HCT116 (cell line): ENCODE measurements at regions of chr2 and their contacts with region 1.

Region 1: DNA sequence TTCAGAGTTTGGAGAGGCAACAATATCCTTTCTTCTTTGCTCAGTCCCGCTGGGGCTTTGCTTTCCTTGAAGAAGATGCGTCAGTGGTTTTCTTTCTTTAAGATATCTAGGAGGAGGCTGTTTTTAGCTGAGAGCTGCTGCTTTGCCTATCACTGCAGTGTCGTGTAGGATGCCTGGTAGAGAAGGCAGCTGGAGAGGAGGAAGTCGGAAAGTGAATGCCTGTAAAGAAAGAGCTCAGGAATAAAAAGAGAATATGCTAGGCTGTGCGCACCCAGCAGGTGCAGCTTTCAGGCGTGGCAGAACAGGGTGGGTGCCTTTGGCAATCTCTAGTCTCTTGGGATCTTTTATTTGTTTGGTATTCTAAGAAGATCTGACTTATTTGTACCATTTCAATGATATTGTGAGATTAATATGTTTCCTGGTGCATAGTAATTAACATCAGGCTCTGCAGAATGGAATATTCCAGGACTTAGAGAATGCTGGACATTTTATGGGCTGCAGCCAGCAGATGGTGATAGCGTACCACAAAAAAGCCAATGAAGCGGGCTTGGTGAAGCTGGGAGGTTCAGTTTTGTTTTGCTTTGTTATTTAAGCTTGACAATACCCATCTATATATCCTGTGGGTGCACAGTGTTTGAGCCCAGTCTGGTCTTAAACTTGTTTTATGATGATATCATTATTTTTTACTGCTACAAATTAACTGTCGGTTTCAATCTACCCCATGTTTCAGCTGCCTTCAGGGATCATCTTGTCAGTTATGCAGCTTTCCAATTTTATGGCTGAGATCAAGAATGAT is 34.9 kb downstream of the CAVIN2 start:
- DNase-seq: peak; percentile 53
- ATAC-seq: peak; percentile 94
- H3K4me3 ChIP-seq: no peak overlapping the region
- H3K27ac ChIP-seq: no peak overlapping the region
- H3K4me1 ChIP-seq: no peaks in the 10 kb centered on the region
- H3K27me3 ChIP-seq: no peaks in the 10 kb centered on the region
- CTCF ChIP-seq: peak; percentile 73 to 89 (median 87)
- POLR2A ChIP-seq: no peak
- RAD21 ChIP-seq: peak; percentile 97

Region 2: DNA sequence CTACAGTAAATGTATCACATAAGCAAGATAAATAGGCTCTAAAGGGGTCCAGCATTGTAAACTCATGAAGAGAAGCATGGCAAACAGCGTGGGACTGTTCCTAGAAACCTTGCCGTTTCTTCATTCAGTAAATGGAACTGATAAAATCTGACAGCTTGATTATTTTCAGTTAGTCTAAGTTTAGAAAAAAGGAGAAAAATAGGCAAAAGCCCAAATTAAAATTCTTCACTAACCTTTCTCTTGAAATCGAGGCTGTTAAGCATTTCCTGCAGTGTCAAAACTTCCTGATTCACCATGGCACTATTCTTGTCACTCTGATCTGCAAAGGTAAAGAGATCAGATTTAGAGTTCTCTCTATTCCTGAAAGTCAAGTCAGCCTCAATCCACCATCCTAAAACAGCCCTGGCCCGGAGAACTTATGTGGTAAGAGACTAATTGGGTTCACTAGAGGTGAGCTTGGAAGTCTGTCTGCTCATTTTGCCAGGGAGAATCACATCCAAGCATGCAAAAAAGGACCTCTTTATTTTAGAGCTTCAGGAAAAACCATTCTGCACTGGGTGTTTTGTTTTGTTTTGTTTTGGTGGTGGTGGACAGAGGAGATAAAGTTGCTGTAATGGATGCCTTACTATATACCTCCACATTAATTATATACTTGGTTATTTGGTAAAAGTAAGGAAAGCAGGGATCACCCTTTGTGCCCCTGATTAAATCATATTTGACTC is 745.6 kb before region 1 on chr2:
- CTCF ChIA-PET with region 1: no interaction called
- POLR2A ChIA-PET with region 1: no interaction called
- RAD21 ChIA-PET with region 1: no interaction called
- intact Hi-C with region 1: no loop called
- DNase-seq: no peak
- ATAC-seq: no peak
- H3K4me3 ChIP-seq: no peak overlapping the region
- H3K27ac ChIP-seq: no peak overlapping the region
- H3K4me1 ChIP-seq: no peaks in the 10 kb centered on the region
- H3K27me3 ChIP-seq: no peaks in the 10 kb centered on the region
- CTCF ChIP-seq: no peak
- POLR2A ChIP-seq: no peak
- RAD21 ChIP-seq: no peak

Region 3: GRCh38 chr2:191713837-191714236 is 98.2 kb before region 1 on chr2:
- CTCF ChIA-PET with region 1: no interaction called
- POLR2A ChIA-PET with region 1: no interaction called
- RAD21 ChIA-PET with region 1: no interaction called
- intact Hi-C with region 1: no loop called
- DNase-seq: peak; percentile 23
- ATAC-seq: peak; percentile 95
- H3K4me3 ChIP-seq: no peak overlapping the region
- H3K27ac ChIP-seq: no peak overlapping the region
- H3K4me1 ChIP-seq: no peaks in the 10 kb centered on the region
- H3K27me3 ChIP-seq: no peaks in the 10 kb centered on the region
- CTCF ChIP-seq: peak; percentile 59 to 64 (median 62)
- POLR2A ChIP-seq: no peak
- RAD21 ChIP-seq: peak; percentile 51; the same call in 1 of the 2 replicates

Region 4: DNA sequence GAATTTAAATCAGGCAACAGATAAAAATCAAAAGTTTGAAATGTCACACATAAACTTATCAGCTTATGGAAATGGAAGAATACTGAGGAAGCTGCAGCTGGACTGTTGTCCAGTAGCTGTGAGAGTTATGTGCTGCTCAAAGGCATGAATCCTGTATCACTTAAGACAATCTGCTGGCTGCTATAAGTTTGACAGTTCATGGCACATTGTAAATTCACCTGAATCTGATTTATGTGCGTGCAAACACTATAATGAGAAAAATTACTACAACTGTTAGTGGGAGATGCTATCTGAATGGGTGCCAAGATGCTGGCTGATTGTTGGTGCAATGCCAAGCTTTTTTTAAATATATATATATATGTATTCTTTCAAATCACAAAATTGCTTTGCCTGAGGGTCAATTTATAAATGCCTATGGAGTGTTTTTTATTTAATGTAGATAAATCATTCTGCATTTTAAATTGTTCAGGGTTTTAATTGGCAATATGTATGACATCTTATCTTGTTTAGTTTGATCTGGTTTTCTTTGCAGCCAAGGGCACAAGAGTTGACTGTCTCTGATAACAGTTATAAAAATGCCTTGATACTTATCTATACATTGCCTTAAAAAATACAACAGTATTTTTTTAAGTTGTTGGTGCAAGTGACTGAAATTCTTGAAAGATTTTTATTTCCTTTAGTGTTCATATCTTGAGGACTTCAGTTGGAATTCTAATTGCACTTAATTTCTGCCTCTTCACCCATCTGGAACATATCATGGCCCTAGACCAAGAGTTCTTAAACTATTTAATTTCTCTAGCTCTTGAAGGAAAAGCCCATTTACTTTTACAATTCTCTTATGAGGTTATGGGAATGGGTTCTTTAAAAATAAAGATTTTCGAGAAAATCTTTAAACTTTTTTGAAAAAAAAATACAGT is 13.8 kb before region 1 on chr2:
- CTCF ChIA-PET with region 1: interaction called, 11 read pairs
- POLR2A ChIA-PET with region 1: no interaction called
- RAD21 ChIA-PET with region 1: no interaction called
- intact Hi-C with region 1: no loop called
- DNase-seq: no peak
- ATAC-seq: no peak
- H3K4me3 ChIP-seq: no peak overlapping the region
- H3K27ac ChIP-seq: no peak overlapping the region
- H3K4me1 ChIP-seq: no peaks in the 10 kb centered on the region
- H3K27me3 ChIP-seq: no peaks in the 10 kb centered on the region
- CTCF ChIP-seq: no peak
- POLR2A ChIP-seq: no peak
- RAD21 ChIP-seq: no peak

Region 5: GRCh38 chr2:191857259-191857805 is 45.3 kb after region 1 on chr2:
- CTCF ChIA-PET with region 1: no interaction called
- POLR2A ChIA-PET with region 1: no interaction called
- RAD21 ChIA-PET with region 1: no interaction called
- intact Hi-C with region 1: no loop called
- DNase-seq: no peak
- ATAC-seq: no peak
- H3K4me3 ChIP-seq: no peak overlapping the region
- H3K27ac ChIP-seq: no peak overlapping the region
- H3K4me1 ChIP-seq: peaks cover 0 to 7% of the 10 kb centered on the region in 2 experiments; a peak in 1 of 4 replicates
- H3K27me3 ChIP-seq: no peaks in the 10 kb centered on the region
- CTCF ChIP-seq: no peak
- POLR2A ChIP-seq: no peak
- RAD21 ChIP-seq: no peak

Region 6: GRCh38 chr2:192162392-192163042 is 350.5 kb after region 1 on chr2:
- CTCF ChIA-PET with region 1: interaction called, 158 read pairs
- POLR2A ChIA-PET with region 1: interaction called, 9 read pairs
- RAD21 ChIA-PET with region 1: interaction called, 54 to 66 read pairs
- intact Hi-C with region 1: loop called (anchors 1 kb)
- DNase-seq: peak; percentile 50
- ATAC-seq: peak; percentile 93
- H3K4me3 ChIP-seq: no peak overlapping the region
- H3K27ac ChIP-seq: no peak overlapping the region
- H3K4me1 ChIP-seq: no peaks in the 10 kb centered on the region
- H3K27me3 ChIP-seq: no peaks in the 10 kb centered on the region
- CTCF ChIP-seq: peak; percentile 82 to 97 (median 91)
- POLR2A ChIP-seq: no peak
- RAD21 ChIP-seq: peak; percentile 95

Region 7: DNA sequence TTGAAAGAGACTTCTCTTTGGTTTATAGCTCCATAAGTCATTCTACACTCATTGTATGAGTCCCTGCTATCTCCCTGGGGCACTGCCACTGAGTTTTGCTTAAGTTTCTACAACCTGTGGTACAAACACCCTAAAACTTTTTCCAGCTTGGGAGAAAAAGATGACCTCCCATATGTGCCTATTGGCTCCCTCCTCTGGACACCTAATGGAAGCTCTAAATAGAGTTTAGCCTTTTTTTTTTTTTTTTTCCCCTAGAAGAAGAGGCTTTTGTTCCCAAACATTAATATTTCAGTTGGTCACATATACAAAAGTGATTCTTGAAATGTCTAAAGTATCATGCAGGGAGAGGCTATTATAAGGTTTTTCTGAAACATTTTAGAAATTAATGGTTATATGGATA is 929.9 kb after region 1 on chr2:
- CTCF ChIA-PET with region 1: interaction called, 6 read pairs
- POLR2A ChIA-PET with region 1: no interaction called
- RAD21 ChIA-PET with region 1: no interaction called
- intact Hi-C with region 1: loop called (anchors 5 kb)
- DNase-seq: peak; percentile 3
- ATAC-seq: peak; percentile 62
- H3K4me3 ChIP-seq: no peak overlapping the region
- H3K27ac ChIP-seq: no peak overlapping the region
- H3K4me1 ChIP-seq: no peaks in the 10 kb centered on the region
- H3K27me3 ChIP-seq: no peaks in the 10 kb centered on the region
- CTCF ChIP-seq: peak; percentile 25 to 56 (median 46); a peak in 5 of 6 replicates
- POLR2A ChIP-seq: no peak
- RAD21 ChIP-seq: peak; percentile 51